Activated T-helper 2 cell treated with anti-CD3 and anti-CD28 coated beads, Interferon-gamma antibody, Interleukin-2, Interleukin-4, amounts not matched to agents 10 μg/mL and 5 μg/mL and 100 μg/mL, durations not matched to agents 14 hours and 24 hours and 36 hours (primary cell): ENCODE measurements at regions of chr2 and their contacts with region 1.

Region 1: DNA sequence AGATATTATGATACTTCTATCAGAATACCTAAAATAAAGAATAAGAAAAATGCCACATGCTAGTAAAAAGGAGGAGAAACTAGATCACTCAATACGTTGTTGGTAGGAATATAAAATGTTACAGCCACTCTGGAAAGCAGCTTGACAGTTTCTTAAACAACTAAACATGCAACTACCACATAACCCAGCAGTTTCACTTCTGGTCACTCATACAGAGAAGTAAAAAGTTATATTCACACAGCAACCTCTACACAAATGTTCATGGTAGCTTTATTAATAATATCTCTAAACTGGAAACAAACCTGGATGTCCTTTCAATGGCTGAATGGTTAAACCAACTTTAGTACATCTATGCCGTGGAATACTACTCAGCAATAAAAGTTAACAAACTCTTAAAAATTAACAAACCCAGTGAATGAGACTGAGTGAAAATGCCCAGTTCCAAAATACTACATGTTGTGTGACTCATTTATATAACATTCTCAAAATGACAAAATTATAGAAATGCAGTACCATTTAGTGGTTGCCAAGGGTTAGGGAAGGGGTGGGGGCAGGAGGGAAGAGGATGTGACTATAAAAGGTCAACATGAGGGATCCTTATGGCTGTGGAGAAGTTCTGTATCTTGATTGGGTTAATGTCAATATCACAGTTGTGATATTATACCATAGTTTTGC is 124.1 kb downstream of the MMADHC start:
- DNase-seq: no peak
- H3K4me3 Mint-ChIP-seq: no peak overlapping the region
- H3K27ac Mint-ChIP-seq: no peak overlapping the region
- H3K4me1 Mint-ChIP-seq: no peaks in the 10 kb centered on the region
- H3K27me3 Mint-ChIP-seq: peaks cover 2% of the 10 kb centered on the region

Region 2: GRCh38 chr2:149537092-149537726 is 73.7 kb after region 1 on chr2:
- intact Hi-C with region 1: loop called (anchors 2 kb)
- DNase-seq: no peak
- H3K4me3 Mint-ChIP-seq: no peak overlapping the region
- H3K27ac Mint-ChIP-seq: no peak overlapping the region
- H3K4me1 Mint-ChIP-seq: peaks cover 14% of the 10 kb centered on the region
- H3K27me3 Mint-ChIP-seq: peaks cover 6% of the 10 kb centered on the region

Region 3: GRCh38 chr2:149715005-149715592 is 251.6 kb after region 1 on chr2:
- intact Hi-C with region 1: no loop called
- DNase-seq: no peak
- H3K4me3 Mint-ChIP-seq: no peak overlapping the region
- H3K27ac Mint-ChIP-seq: no peak overlapping the region
- H3K4me1 Mint-ChIP-seq: no peaks in the 10 kb centered on the region
- H3K27me3 Mint-ChIP-seq: no peaks in the 10 kb centered on the region